Posterior cingulate gyrus (tissue), 11 donors: ENCODE measurements at regions of chr18 and their contacts with region 1.

Region 1: DNA sequence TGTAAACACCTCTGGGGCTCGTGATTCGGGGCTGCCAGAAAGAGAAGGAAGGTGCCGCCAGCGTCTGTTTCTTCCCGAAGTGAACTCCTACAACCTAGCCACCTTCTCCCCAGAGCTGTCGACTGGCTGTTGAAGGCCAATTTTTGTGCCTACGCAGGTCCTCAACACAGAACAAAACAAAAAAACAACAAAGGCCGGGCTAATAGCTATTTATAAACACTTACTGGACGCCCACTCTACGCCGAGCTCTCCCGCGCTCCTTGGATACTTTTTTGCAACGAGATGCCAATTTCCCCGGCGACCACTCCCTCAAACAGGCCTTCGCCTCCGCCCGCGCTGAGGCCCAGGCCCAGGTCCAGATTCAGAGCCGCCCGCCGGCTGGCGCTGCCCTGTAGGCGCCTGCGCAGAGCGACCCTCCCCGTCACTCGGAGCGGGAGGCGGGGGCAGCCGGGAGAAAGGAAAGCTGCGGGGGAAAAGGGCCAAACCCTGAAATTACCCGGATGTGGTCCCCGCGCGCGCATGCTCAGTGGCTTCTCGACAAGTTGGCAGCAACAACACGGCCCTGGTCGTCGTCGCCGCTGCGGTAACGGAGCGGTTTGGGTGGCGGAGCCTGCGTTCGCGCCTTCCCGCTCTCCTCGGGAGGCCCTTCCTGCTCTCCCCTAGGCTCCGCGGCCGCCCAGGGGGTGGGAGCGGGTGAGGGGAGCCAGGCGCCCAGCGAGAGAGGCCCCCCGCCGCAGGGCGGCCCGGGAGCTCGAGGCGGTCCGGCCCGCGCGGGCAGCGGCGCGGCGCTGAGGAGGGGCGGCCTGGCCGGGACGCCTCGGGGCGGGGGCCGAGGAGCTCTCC is at the start of gene SMAD4:
- DNase-seq: peak; percentile 90 to 99 (median 96)

Region 2: DNA sequence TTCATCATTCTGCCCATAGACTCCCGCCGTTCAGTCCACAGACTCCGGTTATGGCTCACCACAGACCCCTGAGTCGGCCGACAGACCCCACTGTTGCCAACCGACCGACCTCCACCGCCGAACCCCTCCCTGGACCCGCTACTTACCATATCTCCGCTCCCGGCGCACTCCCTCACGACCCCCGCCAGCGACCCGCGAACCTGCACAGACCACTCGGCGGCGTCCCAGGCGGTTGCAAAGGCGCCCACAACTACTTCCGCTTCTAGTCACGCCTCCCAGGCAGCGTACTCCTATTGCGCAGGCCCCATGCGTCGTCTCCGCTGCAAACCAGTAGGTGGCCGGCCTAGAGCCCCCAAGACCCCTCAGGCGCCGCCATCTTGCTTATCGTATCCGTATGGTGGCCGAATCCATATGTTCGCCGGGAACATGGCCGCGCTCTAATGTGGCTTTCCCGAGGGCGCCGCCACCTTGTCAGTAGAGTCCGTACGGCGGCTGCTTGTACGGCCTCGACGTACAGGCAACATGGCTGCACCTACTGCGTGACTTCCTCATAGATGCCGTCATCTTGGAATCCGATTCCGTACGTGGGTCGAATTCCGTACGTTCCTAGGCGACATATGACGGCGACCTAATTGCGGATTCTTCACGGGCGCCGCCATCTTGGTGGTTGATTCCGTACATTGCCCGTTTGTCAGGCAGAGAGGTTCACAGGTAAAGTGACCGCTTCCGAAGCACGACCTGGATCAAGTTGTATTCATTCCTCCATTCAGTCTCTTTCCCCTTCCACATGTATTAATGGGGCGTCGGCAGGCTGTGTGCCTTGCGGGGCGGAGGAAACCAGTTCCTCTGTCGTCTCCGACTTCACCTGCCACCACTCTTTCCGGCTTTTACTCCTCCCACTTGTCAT is 742.2 kb before region 1 on chr18 and contains the start of gene CXXC1:
- intact Hi-C with region 1: loop called (anchors 10 kb)
- DNase-seq: peak; percentile 93 to 100 (median 98)

Region 3: DNA sequence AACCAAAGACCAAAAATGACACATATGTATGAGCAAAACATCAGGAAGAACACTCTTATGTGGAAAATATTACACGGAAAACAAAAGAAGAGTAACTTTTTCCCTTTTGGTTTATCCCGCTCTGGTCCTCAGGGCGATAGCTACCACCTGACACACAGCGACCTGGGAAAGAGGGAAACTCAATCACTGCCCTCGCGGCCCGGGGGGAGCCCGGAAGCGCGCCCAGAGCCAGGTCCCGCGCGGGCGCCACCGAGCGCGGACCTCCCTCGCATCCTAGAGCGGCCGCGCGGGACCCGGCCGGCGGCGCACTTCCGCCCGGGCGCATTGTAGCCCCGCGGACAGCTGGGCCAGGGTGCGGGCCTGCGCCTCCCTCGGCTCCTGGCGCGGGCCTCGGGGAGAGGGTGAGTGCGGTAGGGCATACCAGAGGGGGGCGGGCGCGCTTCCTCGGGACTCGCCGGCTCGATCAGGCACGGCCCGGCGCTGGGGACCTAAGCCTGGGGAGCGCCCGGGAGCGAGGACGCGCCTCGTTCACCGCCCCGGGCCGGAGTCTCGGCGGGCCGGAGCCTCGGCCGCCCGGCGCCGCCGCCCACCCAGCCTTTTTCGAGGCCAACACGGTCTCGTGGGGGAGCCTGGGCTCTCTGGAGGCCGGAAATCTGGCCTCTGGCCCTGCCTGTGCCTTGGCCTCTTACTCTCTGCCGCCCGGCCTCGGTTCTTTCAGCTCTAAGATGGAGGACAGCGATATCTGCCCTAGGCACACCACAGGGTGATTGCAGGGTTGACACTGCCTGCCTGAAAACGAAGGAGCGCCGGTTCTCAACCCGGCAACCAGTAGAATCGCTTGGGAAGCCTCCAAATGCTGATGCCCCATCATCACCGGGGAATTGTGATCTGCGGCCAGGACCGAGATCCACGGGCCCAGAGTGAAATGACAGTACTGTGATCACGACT is 61.9 kb before region 1 on chr18 and contains the start of gene ELAC1:
- intact Hi-C with region 1: loop called (anchors 1 kb)
- DNase-seq: peak; percentile 55 to 96 (median 68)

Region 4: DNA sequence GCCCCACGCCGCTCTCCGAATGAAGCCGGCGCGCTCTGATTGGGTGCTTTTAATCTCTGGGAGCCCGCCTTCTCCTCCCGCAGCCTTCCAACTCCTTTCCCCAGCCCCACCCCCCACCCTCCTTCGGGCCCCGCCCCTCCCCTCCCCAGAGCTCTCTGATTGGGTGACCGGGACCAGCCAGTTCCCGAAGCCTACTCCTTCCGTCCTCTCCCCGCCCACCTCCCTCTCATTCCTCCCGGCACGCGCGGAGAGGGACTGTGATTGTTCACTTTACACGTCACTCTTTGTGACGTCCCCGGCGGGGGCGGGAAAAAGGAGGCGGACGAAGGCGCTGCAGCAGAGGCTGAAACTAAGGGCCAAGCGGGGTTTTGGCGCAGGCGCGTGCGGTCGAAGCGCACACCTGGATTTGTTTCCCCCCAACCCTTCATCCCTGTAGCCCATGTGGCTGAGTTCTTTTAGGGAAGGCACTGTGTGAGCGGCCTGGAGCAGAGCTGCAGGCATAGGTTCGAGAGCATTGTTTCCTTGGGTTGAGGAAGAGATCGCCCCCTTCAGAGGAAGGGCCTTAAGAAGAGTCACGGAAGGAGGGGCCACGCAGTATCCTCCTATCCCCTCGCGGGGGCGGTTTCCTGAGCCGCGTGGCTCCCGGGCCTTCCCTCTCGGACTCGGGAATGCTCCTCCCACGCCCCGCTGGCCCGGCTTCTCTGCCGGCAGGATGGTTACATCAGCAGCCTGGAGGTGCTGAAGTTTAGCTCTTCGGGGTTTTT is 167.9 kb after region 1 on chr18 and contains the start of gene MEX3C:
- intact Hi-C with region 1: loop called (anchors 5 kb)
- DNase-seq: peak; percentile 98 to 100 (median 99)